ENCODE measurements at regions of chr22 and their contacts with region 1.

Region 1: DNA sequence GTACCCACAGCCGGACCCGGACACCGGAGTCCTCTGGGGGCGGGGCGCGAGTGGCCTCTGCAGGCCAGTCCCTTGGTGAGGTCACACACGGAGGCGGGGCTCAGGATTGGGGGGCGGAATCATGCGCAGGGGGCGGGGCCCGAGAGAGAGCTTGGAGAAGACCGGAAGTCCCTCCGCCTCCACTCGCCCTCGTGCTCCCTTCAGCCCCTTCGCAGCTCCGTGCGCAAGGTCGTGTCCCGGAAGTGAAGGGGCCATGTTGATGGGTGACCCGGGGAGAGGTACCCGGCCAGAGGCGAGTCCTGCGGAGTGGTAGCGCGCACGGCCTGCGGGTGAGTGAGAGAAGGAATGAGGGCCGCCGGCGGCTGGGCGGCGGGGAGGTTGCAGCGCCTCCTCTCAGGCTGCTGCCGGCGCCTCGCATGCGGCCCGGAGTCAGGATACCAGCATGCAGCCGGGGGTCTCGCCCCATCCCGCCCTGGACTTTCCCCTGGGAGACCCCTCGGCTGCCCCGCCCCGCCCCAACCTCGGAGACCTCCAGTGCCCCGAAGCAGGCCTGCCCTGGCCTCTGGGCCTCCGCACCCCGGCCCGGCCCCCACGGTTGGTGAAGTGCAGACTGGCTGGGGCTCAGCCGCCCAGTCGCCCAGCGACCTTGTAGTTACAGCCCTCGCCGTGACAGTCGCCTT is at the start of gene MIEF1:
- DNase-seq: peak; percentile 94 to 95 (median 95)
- H3K4me3 ChIP-seq: peak within 1 kb of the TSS; percentile 55 to 95 (median 86)
- H3K27ac ChIP-seq: peak within 1 kb of the TSS; percentile 58 to 85
- H3K4me1 ChIP-seq: peaks cover 12 to 20% (median 17%) of the 10 kb centered on the region in 4 experiments
- H3K27me3 ChIP-seq: no peaks in the 10 kb centered on the region

Region 2: GRCh38 chr22:39514373-39514973 is 12.2 kb after region 1 on chr22:
- CTCF ChIA-PET with region 1: interaction called, 254 read pairs
- POLR2A ChIA-PET with region 1: interaction called, 12 read pairs
- DNase-seq: peak in 2 of 3 donors; percentile 53 to 67
- H3K4me3 ChIP-seq: no peak overlapping the region
- H3K27ac ChIP-seq: no peak overlapping the region
- H3K4me1 ChIP-seq: peaks cover 5 to 17% (median 15%) of the 10 kb centered on the region in 4 experiments
- H3K27me3 ChIP-seq: no peaks in the 10 kb centered on the region

Region 3: GRCh38 chr22:39520054-39520891 is 18.0 kb after region 1 on chr22 and contains the start of gene ATF4:
- CTCF ChIA-PET with region 1: interaction called, 254 read pairs
- POLR2A ChIA-PET with region 1: interaction called, 12 read pairs
- DNase-seq: peak; percentile 99 to 100 (median 100)
- H3K4me3 ChIP-seq: peak within 1 kb of the TSS; percentile 93 to 97 (median 95)
- H3K27ac ChIP-seq: peak within 1 kb of the TSS; percentile 96 to 99
- H3K4me1 ChIP-seq: peaks cover 11 to 54% (median 50%) of the 10 kb centered on the region in 4 experiments
- H3K27me3 ChIP-seq: no peaks in the 10 kb centered on the region